T-cell (primary cell): ENCODE measurements at regions of chr20 and their contacts with region 1.

Region 1: GRCh38 chr20:49608743-49609670 is 41.1 kb upstream of the PTGIS start:
- DNase-seq: peak; percentile 41 to 84 (median 65)
- ATAC-seq: peak; percentile 80 to 89 (median 86)
- H3K4me3 ChIP-seq: peak overlapping the region in 1 of 2 donors; percentile 30
- H3K4me3 Mint-ChIP-seq: peak overlapping the region; percentile 40 to 59 (median 51)
- H3K27ac ChIP-seq: no peak overlapping the region
- H3K27ac Mint-ChIP-seq: no peak overlapping the region
- H3K4me1 ChIP-seq: peaks cover 0 to 19% of the 10 kb centered on the region in 2 experiments
- H3K4me1 Mint-ChIP-seq: peaks cover 13 to 16% (median 14%) of the 10 kb centered on the region in 3 donors
- H3K27me3 ChIP-seq: peaks cover 0 to 26% of the 10 kb centered on the region in 2 experiments
- H3K27me3 Mint-ChIP-seq: peaks cover 8 to 12% of the 10 kb centered on the region in 2 donors

Region 2: GRCh38 chr20:49541733-49542513 is 67.1 kb before region 1 on chr20:
- CTCF ChIA-PET with region 1: interaction called in 1 of 2 experiments, 13 read pairs
- POLR2A ChIA-PET with region 1: no interaction called
- DNase-seq: peak in 32 of 35 experiments; percentile 8 to 79 (median 38)
- ATAC-seq: peak; percentile 43 to 50 (median 44)
- H3K4me3 ChIP-seq: no peak overlapping the region
- H3K4me3 Mint-ChIP-seq: no peak overlapping the region
- H3K27ac ChIP-seq: no peak overlapping the region
- H3K27ac Mint-ChIP-seq: no peak overlapping the region
- H3K4me1 ChIP-seq: no peaks in the 10 kb centered on the region
- H3K4me1 Mint-ChIP-seq: peaks cover 0 to 2% (median 2%) of the 10 kb centered on the region in 3 donors
- H3K27me3 ChIP-seq: peaks cover 0 to 48% of the 10 kb centered on the region in 2 experiments
- H3K27me3 Mint-ChIP-seq: peaks cover 9% of the 10 kb centered on the region in 2 donors

Region 3: DNA sequence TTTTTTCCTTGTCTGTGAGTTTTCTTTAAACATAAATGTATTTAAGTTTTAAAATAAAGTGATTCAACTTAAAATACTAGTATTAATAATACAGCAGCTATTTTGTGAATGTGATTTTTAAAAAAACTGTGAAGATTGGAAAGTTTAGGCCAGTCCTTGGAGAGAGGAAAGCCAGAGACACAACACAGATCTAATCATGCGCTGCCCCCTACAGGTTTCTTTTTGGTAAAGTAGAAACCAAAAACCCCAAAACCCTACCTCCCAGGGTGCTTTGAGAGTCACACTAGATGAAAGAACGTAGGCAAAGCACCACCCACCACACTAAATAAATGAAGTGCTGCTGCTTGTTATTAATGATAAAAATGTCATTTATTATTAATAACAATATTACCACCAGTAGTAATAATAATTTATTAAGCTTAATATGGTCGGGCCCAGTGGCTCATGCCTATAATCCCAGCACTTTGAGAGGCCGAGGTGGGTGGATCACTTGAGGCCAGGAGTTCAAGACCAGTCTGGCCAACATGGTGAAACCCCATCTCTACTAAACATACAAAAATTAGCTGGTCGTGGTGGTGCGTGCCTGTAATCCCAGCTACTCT is 237.3 kb after region 1 on chr20:
- CTCF ChIA-PET with region 1: interaction called, 6 to 11 read pairs
- POLR2A ChIA-PET with region 1: no interaction called
- DNase-seq: peak in 30 of 35 experiments; percentile 12 to 78 (median 34)
- ATAC-seq: peak; percentile 55 to 78 (median 72)
- H3K4me3 ChIP-seq: no peak overlapping the region
- H3K4me3 Mint-ChIP-seq: no peak overlapping the region
- H3K27ac ChIP-seq: no peak overlapping the region
- H3K27ac Mint-ChIP-seq: no peak overlapping the region
- H3K4me1 ChIP-seq: peaks cover 5% of the 10 kb centered on the region in 2 experiments
- H3K4me1 Mint-ChIP-seq: peaks cover 17 to 28% (median 18%) of the 10 kb centered on the region in 3 donors
- H3K27me3 ChIP-seq: no peaks in the 10 kb centered on the region
- H3K27me3 Mint-ChIP-seq: no peaks in the 10 kb centered on the region